ENCODE measurements at regions of chr6 and their contacts with region 1.

Region 1: DNA sequence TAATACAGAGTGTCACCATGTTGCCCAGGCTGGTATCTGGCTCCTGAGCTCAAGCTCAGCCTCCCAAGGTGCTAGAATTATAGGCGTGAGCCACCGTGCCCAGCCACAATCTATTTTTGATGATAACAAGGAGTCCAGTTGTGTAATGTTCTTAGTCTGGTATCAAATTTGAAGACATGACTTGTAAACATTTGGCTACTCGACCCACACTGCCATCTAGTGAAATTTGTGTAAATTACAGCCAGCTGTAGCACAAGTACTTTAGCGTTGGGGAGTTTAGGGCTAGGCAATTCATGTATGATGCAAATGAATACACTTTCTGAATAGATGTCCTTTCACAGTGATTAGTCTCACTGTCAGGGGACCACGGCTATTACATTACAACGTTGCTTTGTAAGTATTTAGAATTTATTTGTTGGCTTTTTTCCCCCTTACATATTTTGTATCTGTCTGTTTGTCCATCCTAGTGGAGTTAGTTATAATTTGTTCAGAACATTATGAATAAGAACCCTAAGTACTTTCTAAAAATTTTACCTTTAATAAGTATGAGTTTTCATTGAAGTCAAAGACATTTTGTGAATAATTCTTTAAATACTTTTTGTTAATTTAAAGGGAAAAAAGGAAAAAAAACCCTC is 139.7 kb downstream of the PRDM13 start:
- DNase-seq: peak in 1 of 2 donors; percentile 30
- ATAC-seq: peak; percentile 74

Region 2: DNA sequence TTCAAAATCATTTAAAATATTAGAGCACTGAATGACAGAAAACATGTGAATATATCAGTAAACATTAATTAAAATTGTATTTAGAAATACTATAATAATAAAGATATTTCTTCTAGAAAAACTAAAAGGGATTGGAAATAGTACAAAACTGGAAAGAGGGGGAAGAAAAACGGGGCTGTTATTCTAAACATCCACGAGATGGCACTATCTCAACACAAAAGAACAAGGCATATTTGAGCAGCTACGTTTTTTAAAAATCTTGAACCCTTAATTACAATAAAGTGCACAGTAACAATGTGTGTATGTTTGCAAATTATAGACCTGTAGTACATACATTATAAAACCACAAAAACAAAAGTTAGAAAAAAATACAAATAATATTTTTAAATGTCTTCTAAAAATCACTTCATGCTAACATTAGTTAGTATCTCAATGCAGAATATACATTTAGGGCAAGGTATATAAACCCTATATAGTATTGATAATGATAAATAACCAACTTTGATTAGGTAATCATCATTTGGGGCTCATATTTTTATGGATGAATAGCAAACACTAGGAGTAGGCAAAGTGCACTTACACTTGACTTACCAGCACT is 278.8 kb before region 1 on chr6:
- intact Hi-C with region 1: loop called in 1 of 2 experiments (anchors 5 kb)
- DNase-seq: no peak
- ATAC-seq: peak; percentile 43

Region 3: GRCh38 chr6:99530627-99531026 is 215.8 kb before region 1 on chr6:
- intact Hi-C with region 1: no loop called
- DNase-seq: no peak
- ATAC-seq: no peak

Region 4: GRCh38 chr6:99590728-99591672 is 155.4 kb before region 1 on chr6:
- intact Hi-C with region 1: loop called in 1 of 2 experiments (anchors 10 kb)
- DNase-seq: no peak
- ATAC-seq: peak; percentile 26

Region 5: GRCh38 chr6:99810942-99811620 is 64.7 kb after region 1 on chr6:
- intact Hi-C with region 1: no loop called
- DNase-seq: peak in 1 of 2 donors; percentile 22
- ATAC-seq: peak; percentile 56